MCF 10A (cell line): ENCODE measurements at regions of chr14 and their contacts with region 1.

Region 1: GRCh38 chr14:57871459-57872080 is 5.7 kb upstream of the SLC35F4 start:
- DNase-seq: peak; percentile 71
- H3K4me3 Mint-ChIP-seq: no peak overlapping the region
- H3K27ac Mint-ChIP-seq: no peak overlapping the region
- H3K4me1 Mint-ChIP-seq: peaks cover 6% of the 10 kb centered on the region
- H3K27me3 Mint-ChIP-seq: no peaks in the 10 kb centered on the region
- CTCF ChIP-seq: peak; percentile 84

Region 2: DNA sequence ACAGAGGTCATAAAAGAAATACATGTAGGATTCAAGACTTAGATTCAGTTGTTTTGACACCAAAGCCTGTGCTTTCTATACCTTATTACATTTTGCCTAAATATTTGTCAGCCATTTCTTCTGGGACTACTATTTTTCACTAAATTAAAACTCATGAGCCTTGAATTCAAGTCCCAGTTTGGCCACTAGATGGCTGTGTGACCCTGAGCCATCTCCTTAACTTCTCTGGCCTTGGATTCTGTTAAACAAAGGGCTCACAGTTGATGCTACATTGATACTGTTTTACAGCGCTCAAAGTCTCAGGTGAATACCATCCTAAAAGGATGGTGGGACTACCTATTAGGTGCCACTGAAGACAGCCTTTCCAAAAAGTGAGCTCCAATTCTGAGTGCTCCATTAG is 338.4 kb before region 1 on chr14:
- CTCF ChIA-PET with region 1: interaction called, 6 read pairs
- POLR2A ChIA-PET with region 1: no interaction called
- intact Hi-C with region 1: loop called (anchors 5 kb)
- DNase-seq: peak; percentile 47
- H3K4me3 Mint-ChIP-seq: no peak overlapping the region
- H3K27ac Mint-ChIP-seq: no peak overlapping the region
- H3K4me1 Mint-ChIP-seq: no peaks in the 10 kb centered on the region
- H3K27me3 Mint-ChIP-seq: no peaks in the 10 kb centered on the region
- CTCF ChIP-seq: peak; percentile 35

Region 3: DNA sequence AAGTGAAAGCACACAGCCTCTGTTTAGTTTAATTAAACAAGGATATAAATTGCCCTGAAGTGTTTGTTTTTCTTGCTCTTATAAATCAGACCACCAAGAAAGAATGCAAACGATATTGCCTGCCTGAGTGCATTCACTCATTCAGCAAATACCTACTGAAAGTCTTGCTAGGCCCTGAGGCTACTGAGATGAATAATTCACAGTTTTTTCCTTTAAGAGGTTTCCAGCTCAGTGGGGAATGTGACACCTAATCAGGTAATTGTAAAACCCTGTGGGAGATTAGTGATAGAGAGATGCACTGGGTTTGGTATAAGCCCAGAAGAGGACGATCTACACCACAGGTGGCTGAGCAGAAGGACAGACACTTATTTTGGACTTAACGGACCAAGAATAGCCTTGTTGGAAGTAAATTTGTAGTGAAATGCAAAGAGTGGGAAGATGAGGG is 157.1 kb before region 1 on chr14:
- CTCF ChIA-PET with region 1: interaction called, 10 read pairs
- POLR2A ChIA-PET with region 1: no interaction called
- intact Hi-C with region 1: loop called (anchors 5 kb)
- DNase-seq: no peak
- H3K4me3 Mint-ChIP-seq: no peak overlapping the region
- H3K27ac Mint-ChIP-seq: no peak overlapping the region
- H3K4me1 Mint-ChIP-seq: peaks cover 5% of the 10 kb centered on the region
- H3K27me3 Mint-ChIP-seq: no peaks in the 10 kb centered on the region
- CTCF ChIP-seq: no peak

Region 4: GRCh38 chr14:57884175-57884574 is 12.6 kb after region 1 on chr14:
- CTCF ChIA-PET with region 1: interaction called, 26 read pairs
- POLR2A ChIA-PET with region 1: interaction called, 4 read pairs
- intact Hi-C with region 1: no loop called
- DNase-seq: peak; percentile 12
- H3K4me3 Mint-ChIP-seq: no peak overlapping the region
- H3K27ac Mint-ChIP-seq: no peak overlapping the region
- H3K4me1 Mint-ChIP-seq: peaks cover 12% of the 10 kb centered on the region
- H3K27me3 Mint-ChIP-seq: peaks cover 15% of the 10 kb centered on the region
- CTCF ChIP-seq: peak; percentile 52